Mammary epithelial cell (primary cell): ENCODE measurements at regions of chr7 and their contacts with region 1.

Region 1: GRCh38 chr7:129468087-129468486 is 33.9 kb downstream of the STRIP2 start:
- DNase-seq: peak; percentile 20
- H3K4me3 ChIP-seq: no peak overlapping the region
- H3K27ac ChIP-seq: no peak overlapping the region
- H3K4me1 ChIP-seq: peaks cover 6% of the 10 kb centered on the region
- H3K27me3 ChIP-seq: no peaks in the 10 kb centered on the region
- CTCF ChIP-seq: no peak

Region 2: GRCh38 chr7:129224251-129225205 is 243.6 kb before region 1 on chr7 and contains the start of gene AHCYL2:
- CTCF ChIA-PET with region 1: no interaction called
- dilution Hi-C with region 1: no loop called
- in situ Hi-C with region 1: loop called (anchors 10 kb)
- intact Hi-C with region 1: no loop called
- DNase-seq: peak; percentile 98
- H3K4me3 ChIP-seq: peak within 1 kb of the TSS; percentile 75 to 82 (median 78)
- H3K27ac ChIP-seq: peak within 1 kb of the TSS; percentile 77
- H3K4me1 ChIP-seq: peaks cover 15% of the 10 kb centered on the region
- H3K27me3 ChIP-seq: no peaks in the 10 kb centered on the region
- CTCF ChIP-seq: no peak
- total RNA-seq, gene AHCYL2: 19.3 to 26.6 TPM

Region 3: GRCh38 chr7:129343099-129343700 is 124.9 kb before region 1 on chr7:
- CTCF ChIA-PET with region 1: no interaction called
- dilution Hi-C with region 1: no loop called
- in situ Hi-C with region 1: no loop called
- intact Hi-C with region 1: loop called (anchors 2 kb)
- DNase-seq: peak; percentile 36
- H3K4me3 ChIP-seq: no peak overlapping the region
- H3K27ac ChIP-seq: no peak overlapping the region
- H3K4me1 ChIP-seq: no peaks in the 10 kb centered on the region
- H3K27me3 ChIP-seq: no peaks in the 10 kb centered on the region
- CTCF ChIP-seq: peak; percentile 67 to 76

Region 4: DNA sequence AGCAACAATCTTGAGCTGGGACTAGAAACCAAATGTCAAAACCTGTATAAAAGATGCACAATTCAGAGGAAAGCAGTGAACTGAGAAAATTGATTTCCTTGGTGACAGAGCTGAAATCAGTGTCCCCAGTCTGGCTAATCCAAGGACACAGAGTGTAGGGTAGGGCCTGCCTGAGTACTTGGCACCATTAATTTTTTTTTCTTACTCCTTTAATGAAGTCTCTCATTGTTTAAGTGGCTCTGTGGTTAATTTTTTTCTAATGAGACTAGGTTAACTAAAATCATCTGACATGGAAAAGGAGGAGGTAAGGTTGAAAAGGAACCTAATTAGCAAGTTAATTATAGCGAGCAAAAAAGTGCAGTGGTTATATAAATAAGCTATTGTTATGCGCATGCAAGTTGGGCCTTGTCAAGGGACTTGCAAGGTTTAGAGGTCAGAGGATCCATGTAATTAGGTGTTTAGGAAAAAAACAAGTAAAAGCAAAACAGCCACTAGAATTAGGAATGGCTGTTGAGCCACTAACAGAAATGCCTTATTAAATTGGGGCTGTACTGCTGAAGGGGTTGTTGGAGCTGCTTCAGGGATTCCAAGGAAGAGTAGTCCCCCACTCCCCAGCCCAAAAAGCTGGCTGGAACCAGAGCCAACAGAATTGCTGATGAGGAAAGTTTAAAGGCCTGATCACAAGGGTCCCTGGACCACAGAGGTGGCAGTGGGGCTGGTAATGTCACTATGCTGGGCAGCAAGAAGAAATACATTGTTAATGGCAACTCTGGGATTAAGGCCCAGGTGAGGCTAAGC is 92.7 kb before region 1 on chr7:
- CTCF ChIA-PET with region 1: interaction called, 4 read pairs
- dilution Hi-C with region 1: no loop called
- in situ Hi-C with region 1: no loop called
- intact Hi-C with region 1: loop called (anchors 2 kb)
- DNase-seq: no peak
- H3K4me3 ChIP-seq: no peak overlapping the region
- H3K27ac ChIP-seq: no peak overlapping the region
- H3K4me1 ChIP-seq: peaks cover 9% of the 10 kb centered on the region
- H3K27me3 ChIP-seq: no peaks in the 10 kb centered on the region
- CTCF ChIP-seq: no peak

Region 5: GRCh38 chr7:129433847-129434674 is 34.0 kb before region 1 on chr7 and contains the start of gene STRIP2:
- CTCF ChIA-PET with region 1: no interaction called
- dilution Hi-C with region 1: no loop called
- in situ Hi-C with region 1: no loop called
- intact Hi-C with region 1: loop called (anchors 1 kb)
- DNase-seq: peak; percentile 80
- H3K4me3 ChIP-seq: peak within 1 kb of the TSS; percentile 60 to 89 (median 85)
- H3K27ac ChIP-seq: peak within 1 kb of the TSS; percentile 67
- H3K4me1 ChIP-seq: peaks cover 29% of the 10 kb centered on the region
- H3K27me3 ChIP-seq: no peaks in the 10 kb centered on the region
- CTCF ChIP-seq: peak in 1 of 2 donors; percentile 35
- total RNA-seq, gene STRIP2: 5.2 to 12.5 TPM

Region 6: DNA sequence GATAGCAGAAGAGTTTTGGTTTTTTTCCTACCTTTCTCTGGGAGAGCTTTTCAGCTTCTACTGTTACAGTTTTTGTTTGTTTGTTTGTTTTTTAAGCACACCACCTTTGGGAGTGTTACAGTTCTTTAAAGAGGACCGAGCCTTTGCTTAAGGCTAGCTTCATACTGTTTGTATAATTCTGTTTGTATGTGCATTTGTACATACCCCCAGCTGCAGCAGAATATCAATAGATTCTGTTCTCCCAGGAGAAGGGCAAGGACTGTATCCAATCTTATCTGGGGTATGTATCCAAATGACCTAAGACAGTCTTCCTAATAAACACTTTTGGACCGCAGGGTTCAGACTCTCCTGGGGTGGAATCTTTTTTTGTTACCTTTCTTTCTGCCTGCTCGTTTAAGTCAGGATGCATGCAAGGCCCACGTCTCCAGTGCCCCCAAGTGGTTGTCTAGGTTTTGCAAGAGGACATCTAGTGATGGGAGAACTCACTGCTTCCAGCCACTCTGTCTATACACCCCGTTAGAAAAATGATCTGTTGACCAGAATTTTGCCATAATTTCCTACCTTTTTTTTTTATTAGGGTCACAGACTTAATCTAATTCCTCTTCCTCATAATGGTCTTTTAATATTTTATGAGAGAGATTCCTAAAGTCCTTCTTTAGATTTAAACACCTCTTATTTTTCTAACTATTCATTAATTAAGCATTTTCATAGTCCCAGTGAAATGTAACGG is 167.4 kb after region 1 on chr7:
- CTCF ChIA-PET with region 1: no interaction called
- dilution Hi-C with region 1: no loop called
- in situ Hi-C with region 1: no loop called
- intact Hi-C with region 1: loop called (anchors 1 kb)
- DNase-seq: peak; percentile 62
- H3K4me3 ChIP-seq: no peak overlapping the region
- H3K27ac ChIP-seq: no peak overlapping the region
- H3K4me1 ChIP-seq: no peaks in the 10 kb centered on the region
- H3K27me3 ChIP-seq: no peaks in the 10 kb centered on the region
- CTCF ChIP-seq: peak; percentile 82 to 93